GM12878 (cell line): ENCODE measurements at regions of chr1 and their contacts with region 1.

Region 1: GRCh38 chr1:87151500-87152421 is 176.9 kb upstream of the LMO4 start:
- DNase-seq: peak; percentile 75
- ATAC-seq: peak; percentile 84
- H3K4me3 ChIP-seq: peak overlapping the region; percentile 47; the same call in 1 of the 2 replicates
- H3K27ac ChIP-seq: peak overlapping the region; percentile 13; the same call in 1 of the 2 replicates
- H3K4me1 ChIP-seq: peaks cover 17% of the 10 kb centered on the region
- H3K27me3 ChIP-seq: no peaks in the 10 kb centered on the region
- CTCF ChIP-seq: peak; percentile 52 to 82 (median 69)
- EP300 ChIP-seq: peak; percentile 6 to 10; a peak in 2 of 4 replicates
- POLR2A ChIP-seq: no peak
- RAD21 ChIP-seq: peak; percentile 67

Region 2: DNA sequence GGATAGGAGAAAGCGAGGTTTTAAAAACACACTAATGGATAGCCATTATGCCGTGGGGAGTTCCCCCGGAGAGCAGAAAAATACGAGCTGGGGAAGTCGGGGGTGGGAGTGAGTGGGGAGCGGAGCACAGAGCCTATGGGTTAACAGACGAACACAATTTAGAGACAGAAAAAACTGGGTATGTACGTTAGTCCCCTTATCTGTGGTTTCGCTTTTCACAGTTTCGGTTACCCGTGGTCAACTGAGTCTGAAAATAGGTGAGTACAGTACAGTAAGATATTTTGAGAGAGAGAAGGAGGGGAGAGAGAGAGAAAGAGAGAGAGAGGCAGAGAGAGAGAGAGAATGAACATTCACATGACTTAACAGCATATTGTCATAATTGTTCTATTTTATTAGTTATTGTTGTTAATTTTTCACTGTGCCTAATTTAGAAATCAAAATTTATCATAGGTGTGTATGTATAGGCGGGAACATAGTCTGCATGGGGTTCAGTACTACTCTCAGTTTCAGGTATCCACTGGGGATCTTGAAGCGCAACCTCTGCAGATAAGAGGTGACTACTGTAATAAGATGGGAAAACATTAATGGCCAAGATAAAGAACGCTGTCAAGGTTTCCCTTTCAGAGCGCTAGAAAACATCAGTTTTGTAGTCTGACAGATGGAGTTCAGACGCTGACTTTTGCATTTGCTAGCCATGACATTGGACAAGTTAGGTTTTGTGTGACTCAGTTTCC is 51.3 kb after region 1 on chr1:
- CTCF ChIA-PET with region 1: interaction called, 3 read pairs
- POLR2A ChIA-PET with region 1: interaction called, 3 read pairs
- RAD21 ChIA-PET with region 1: interaction called, 4 read pairs
- SMC1A ChIA-PET with region 1: interaction called, 7 read pairs
- in situ Hi-C with region 1: no loop called
- intact Hi-C with region 1: loop called (anchors 2 kb)
- DNase-seq: peak; percentile 69
- ATAC-seq: peak; percentile 96
- H3K4me3 ChIP-seq: no peak overlapping the region; the same call in 1 of the 2 replicates
- H3K27ac ChIP-seq: no peak overlapping the region
- H3K4me1 ChIP-seq: peaks cover 12% of the 10 kb centered on the region
- H3K27me3 ChIP-seq: no peaks in the 10 kb centered on the region; a peak in 2 of 4 replicates
- CTCF ChIP-seq: no peak
- EP300 ChIP-seq: peak; percentile 35 to 74; a peak in 1 of 4 replicates
- POLR2A ChIP-seq: no peak
- RAD21 ChIP-seq: no peak

Region 3: DNA sequence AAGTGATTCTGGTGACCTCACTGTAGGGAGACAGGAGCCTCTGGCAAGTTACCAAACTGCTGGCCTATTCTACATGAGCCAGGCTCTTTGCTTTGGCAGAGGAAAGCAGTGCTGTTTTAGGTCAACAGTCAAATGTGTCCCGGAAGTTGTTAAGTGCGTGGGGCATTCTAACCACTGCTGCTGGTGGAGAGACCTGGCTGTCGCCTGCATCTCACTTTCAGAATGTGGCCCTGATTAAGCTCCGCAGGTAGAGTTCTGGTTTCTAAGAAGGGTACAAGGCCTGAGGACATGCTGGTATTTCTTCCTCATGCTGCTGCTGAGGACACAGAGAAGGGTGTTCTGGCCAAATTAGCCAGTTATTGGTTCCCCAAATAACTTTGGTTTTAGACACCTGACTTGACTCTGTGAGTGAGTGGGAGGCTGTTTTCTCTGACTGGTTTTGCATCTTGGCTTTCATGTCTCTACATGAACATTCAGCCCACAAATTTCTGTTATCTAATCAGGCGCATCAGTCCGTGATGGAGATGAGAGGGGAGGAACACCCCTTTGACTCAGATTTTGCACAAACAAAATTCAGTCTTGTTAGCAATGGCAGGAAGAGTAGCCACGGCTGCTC is 297.7 kb after region 1 on chr1:
- CTCF ChIA-PET with region 1: no interaction called
- POLR2A ChIA-PET with region 1: no interaction called
- RAD21 ChIA-PET with region 1: interaction called, 4 read pairs
- SMC1A ChIA-PET with region 1: no interaction called
- in situ Hi-C with region 1: no loop called
- intact Hi-C with region 1: loop called (anchors 10 kb)
- DNase-seq: peak; percentile 98
- ATAC-seq: peak; percentile 91
- H3K4me3 ChIP-seq: 0 out of 2 replicates have a peak overlapping the region, but pooled peaks have one; percentile 4
- H3K27ac ChIP-seq: peak overlapping the region; percentile 48
- H3K4me1 ChIP-seq: peaks cover 19% of the 10 kb centered on the region
- H3K27me3 ChIP-seq: no peaks in the 10 kb centered on the region
- CTCF ChIP-seq: no peak
- EP300 ChIP-seq: peak; percentile 85 to 90
- POLR2A ChIP-seq: peak; percentile 65
- RAD21 ChIP-seq: no peak; the same call in 1 of the 2 replicates

Region 4: DNA sequence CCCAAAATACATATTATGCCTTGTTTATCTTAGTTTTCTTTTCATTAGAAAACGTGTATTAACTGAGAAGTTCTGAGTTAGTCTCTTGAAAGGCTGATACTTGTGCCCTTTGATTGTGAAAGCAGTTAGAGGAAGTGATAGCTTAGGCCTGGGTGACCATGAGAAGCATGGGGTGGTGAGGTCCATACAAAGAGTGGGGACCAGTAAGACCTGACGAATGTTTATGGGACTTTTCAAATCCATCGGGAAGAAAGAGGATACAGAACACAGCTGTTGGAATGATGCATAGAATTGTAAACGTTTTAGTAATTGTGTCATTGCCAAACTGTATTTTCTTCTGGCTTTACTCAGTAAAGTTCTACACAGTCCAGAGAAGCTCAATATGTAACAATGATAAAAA is 436.7 kb after region 1 on chr1:
- CTCF ChIA-PET with region 1: no interaction called
- POLR2A ChIA-PET with region 1: no interaction called
- RAD21 ChIA-PET with region 1: no interaction called
- SMC1A ChIA-PET with region 1: no interaction called
- in situ Hi-C with region 1: no loop called
- intact Hi-C with region 1: loop called (anchors 10 kb)
- DNase-seq: peak; percentile 33
- ATAC-seq: peak; percentile 94
- H3K4me3 ChIP-seq: no peak overlapping the region
- H3K27ac ChIP-seq: no peak overlapping the region
- H3K4me1 ChIP-seq: peaks cover 33% of the 10 kb centered on the region
- H3K27me3 ChIP-seq: no peaks in the 10 kb centered on the region
- CTCF ChIP-seq: no peak
- EP300 ChIP-seq: no peak
- POLR2A ChIP-seq: no peak
- RAD21 ChIP-seq: no peak

Region 5: GRCh38 chr1:87953732-87954344 is 802.1 kb after region 1 on chr1:
- CTCF ChIA-PET with region 1: interaction called, 5 read pairs
- POLR2A ChIA-PET with region 1: no interaction called
- RAD21 ChIA-PET with region 1: no interaction called
- SMC1A ChIA-PET with region 1: no interaction called
- in situ Hi-C with region 1: no loop called
- intact Hi-C with region 1: loop called (anchors 5 kb)
- DNase-seq: no peak
- ATAC-seq: peak; percentile 95
- H3K4me3 ChIP-seq: no peak overlapping the region
- H3K27ac ChIP-seq: no peak overlapping the region
- H3K4me1 ChIP-seq: no peaks in the 10 kb centered on the region
- H3K27me3 ChIP-seq: no peaks in the 10 kb centered on the region; a peak in 1 of 4 replicates
- CTCF ChIP-seq: peak; percentile 75 to 85 (median 76)
- EP300 ChIP-seq: no peak
- POLR2A ChIP-seq: no peak
- RAD21 ChIP-seq: peak; percentile 89